GM10248 (cell line): ENCODE measurements at regions of chr7 and their contacts with region 1.

Region 1: DNA sequence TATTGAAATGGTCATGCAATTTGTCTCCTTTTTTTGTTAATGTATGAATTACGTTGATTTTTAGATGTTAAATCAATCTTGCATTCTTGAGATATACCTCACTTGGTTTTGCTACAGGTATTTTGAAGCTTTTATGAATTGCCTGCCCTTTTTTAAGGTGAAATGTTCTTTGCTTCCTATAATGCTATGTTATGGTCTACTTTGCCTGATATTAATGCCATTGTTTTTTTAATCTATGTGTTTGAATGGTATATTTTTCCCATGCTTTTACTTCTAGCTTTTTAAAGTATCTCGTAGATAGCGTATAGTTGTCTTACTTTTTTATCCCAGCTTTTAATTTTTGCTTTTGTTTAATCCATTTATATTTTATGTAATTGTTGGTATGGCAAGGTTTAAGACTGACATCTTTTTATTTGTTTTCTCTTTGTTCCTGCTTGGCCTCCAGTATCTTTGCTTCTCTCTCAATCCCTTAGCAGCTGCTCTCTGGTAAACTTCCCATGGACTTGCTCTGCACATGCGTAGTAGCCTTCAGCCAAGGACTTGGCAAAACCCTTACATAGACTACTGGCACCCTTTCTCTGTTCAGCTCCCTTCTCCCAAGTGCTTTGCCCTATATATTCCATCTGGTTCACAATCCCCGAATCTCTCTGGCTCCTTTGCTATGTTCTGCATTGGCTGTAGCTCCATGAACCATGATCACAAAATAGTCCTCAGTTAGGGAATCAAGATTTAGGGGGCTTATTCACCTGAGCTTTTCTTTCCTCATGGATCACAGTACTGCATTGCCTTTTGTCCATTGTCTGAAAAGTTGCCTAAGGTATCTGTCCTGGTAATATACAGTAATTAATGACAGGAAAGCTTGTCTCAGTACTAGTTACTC is 8.4 kb downstream of the TRIM24 start:
- DNase-seq: no peak
- CTCF ChIP-seq: no peak

Region 2: GRCh38 chr7:138478499-138478908 is 10.0 kb after region 1 on chr7:
- CTCF ChIA-PET with region 1: interaction called, 26 read pairs
- POLR2A ChIA-PET with region 1: no interaction called
- DNase-seq: peak; percentile 22
- CTCF ChIP-seq: no peak